Lower leg skin (tissue), 4 donors: ENCODE measurements at regions of chr9 and their contacts with region 1.

Region 1: DNA sequence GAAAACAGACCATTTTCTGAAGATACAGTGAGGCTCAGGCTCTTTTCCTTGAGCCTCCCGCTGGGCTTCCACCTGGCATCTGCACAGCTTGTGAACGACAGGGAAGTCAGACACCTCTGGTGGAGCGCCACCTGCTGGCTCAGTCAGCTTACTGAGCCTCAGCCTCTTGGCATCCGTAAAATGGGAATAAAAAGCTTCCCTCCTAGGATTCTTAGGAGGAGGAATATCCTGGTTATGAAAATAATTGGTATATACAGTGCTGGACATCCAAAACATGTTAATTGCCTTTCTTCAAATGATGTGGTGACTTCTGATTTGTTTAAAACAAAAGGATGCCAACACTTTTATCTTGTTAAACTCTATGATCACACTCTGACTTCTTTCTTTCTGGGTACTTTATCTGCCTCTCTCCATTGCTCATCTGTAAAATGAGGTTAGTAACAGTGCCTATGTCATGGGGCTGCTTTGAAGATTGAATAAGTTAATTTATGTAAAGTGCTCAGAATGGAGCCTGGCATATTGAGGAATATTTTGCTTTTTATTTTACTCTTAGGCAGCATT is 67.5 kb downstream of the MAMDC2 start:
- DNase-seq: peak; percentile 67 to 95
- H3K4me3 ChIP-seq: no peak overlapping the region
- CTCF ChIP-seq: peak in 1 of 3 donors; percentile 73
- POLR2A ChIP-seq: no peak

Region 2: GRCh38 chr9:69857131-69857530 is 254.0 kb before region 1 on chr9:
- intact Hi-C with region 1: no loop called
- DNase-seq: no peak
- H3K4me3 ChIP-seq: no peak overlapping the region
- CTCF ChIP-seq: no peak
- POLR2A ChIP-seq: no peak

Region 3: DNA sequence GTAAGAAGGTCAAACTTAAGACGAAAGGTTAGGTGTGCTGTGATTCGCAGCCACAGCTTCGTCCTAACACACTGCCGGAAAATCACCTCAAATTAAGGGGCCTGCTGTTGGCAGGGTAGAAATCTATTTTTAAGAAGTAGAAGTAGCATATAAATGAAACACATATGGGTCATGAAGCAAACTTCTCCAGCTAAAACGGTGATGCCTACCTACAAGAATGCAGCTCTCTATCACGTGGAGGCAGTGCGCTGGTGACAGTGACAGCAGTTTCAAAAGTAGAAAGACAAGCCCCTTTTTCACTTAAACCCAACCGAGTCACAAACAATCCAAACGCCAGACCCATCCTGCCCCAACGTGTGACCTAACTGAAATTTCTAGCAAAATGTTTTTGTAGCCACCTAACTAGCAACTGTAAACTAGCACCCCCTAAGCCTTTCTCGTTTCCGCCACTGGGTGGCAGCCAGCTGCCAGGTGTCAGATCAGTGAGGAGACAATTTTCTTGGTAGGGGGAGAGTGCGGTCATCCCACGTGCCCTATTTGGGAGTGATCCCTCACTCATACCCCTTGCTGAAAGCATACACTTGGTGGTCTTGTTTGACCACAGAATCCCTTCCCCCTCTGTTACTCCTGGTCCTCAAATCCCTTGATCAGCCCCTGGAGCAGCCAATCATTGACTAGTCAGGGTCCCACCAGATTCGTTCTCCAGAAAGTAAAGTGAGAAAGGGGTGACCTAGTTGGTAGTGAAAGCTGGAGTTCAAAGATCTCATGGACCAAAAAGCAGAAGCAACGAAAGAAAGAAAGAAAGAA is 139.3 kb before region 1 on chr9:
- intact Hi-C with region 1: loop called (anchors 5 kb)
- DNase-seq: peak; percentile 72 to 95
- H3K4me3 ChIP-seq: no peak overlapping the region
- CTCF ChIP-seq: peak in 1 of 3 donors; percentile 71
- POLR2A ChIP-seq: no peak

Region 4: GRCh38 chr9:70013598-70014196 is 97.4 kb before region 1 on chr9:
- intact Hi-C with region 1: no loop called
- DNase-seq: peak in 1 of 2 donors; percentile 30
- H3K4me3 ChIP-seq: no peak overlapping the region
- CTCF ChIP-seq: no peak
- POLR2A ChIP-seq: no peak

Region 5: DNA sequence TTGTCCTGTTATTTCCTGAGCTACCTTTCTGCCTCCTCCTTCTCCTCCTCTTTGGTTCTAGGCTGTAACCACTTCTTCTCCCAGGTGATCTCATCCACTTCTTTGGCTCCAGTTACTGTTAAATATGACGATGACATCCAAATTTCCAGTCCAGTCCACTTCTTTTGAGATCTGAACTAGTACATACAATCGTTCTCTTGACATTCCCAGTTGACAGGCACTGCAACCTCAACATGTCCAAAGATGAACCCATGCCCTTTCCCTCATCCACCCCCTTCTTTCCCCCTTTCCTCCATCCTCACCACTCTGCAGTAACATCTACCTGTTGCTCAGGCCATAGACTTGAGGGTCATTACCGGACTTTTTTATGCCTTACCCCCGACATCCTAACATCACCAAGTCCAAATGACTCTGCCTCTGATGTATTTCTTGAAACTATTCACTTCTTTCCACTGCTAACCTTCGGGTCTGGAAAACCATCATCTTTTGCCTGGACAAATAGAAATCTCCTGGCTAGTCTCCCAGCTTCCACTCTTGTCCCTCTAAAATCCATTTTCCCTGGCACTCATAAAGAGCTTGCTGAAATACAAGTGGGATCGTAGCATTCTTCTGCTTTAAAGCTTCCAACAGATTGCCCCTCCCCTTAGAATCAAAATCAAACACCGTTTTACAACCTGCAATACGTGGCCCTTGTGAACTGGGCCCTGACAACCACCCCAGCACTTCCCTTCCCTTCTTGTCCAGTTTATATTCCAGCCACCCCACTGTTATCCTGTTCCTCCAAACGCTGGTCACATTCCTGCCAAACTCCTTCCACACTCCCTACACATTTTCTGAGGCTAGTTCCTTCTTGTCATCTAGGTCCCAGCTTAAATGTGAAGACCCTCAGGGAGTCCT is 271.8 kb after region 1 on chr9:
- intact Hi-C with region 1: no loop called
- DNase-seq: no peak
- H3K4me3 ChIP-seq: no peak overlapping the region
- CTCF ChIP-seq: no peak
- POLR2A ChIP-seq: no peak